CD8-positive, alpha-beta T cell (primary cell): ENCODE measurements at regions of chr17 and their contacts with region 1.

Region 1: GRCh38 chr17:41957031-41957868 is 9.3 kb upstream of the CNP start:
- DNase-seq: no peak
- ATAC-seq: no peak
- H3K4me3 ChIP-seq: no peak overlapping the region
- H3K4me3 Mint-ChIP-seq: no peak overlapping the region
- H3K27ac ChIP-seq: no peak overlapping the region
- H3K27ac Mint-ChIP-seq: no peak overlapping the region
- H3K4me1 ChIP-seq: no peaks in the 10 kb centered on the region
- H3K4me1 Mint-ChIP-seq: no peaks in the 10 kb centered on the region
- H3K27me3 ChIP-seq: no peaks in the 10 kb centered on the region
- H3K27me3 Mint-ChIP-seq: no peaks in the 10 kb centered on the region
- CTCF ChIP-seq: no peak

Region 2: GRCh38 chr17:41937970-41938954 is 19.0 kb before region 1 on chr17:
- CTCF ChIA-PET with region 1: interaction called, 4 read pairs
- POLR2A ChIA-PET with region 1: no interaction called
- intact Hi-C with region 1: loop called in 1 of 2 experiments (anchors 2 kb)
- DNase-seq: no peak
- ATAC-seq: no peak
- H3K4me3 ChIP-seq: no peak overlapping the region
- H3K4me3 Mint-ChIP-seq: no peak overlapping the region
- H3K27ac ChIP-seq: no peak overlapping the region
- H3K27ac Mint-ChIP-seq: no peak overlapping the region
- H3K4me1 ChIP-seq: no peaks in the 10 kb centered on the region
- H3K4me1 Mint-ChIP-seq: no peaks in the 10 kb centered on the region
- H3K27me3 ChIP-seq: no peaks in the 10 kb centered on the region
- H3K27me3 Mint-ChIP-seq: no peaks in the 10 kb centered on the region
- CTCF ChIP-seq: no peak

Region 3: DNA sequence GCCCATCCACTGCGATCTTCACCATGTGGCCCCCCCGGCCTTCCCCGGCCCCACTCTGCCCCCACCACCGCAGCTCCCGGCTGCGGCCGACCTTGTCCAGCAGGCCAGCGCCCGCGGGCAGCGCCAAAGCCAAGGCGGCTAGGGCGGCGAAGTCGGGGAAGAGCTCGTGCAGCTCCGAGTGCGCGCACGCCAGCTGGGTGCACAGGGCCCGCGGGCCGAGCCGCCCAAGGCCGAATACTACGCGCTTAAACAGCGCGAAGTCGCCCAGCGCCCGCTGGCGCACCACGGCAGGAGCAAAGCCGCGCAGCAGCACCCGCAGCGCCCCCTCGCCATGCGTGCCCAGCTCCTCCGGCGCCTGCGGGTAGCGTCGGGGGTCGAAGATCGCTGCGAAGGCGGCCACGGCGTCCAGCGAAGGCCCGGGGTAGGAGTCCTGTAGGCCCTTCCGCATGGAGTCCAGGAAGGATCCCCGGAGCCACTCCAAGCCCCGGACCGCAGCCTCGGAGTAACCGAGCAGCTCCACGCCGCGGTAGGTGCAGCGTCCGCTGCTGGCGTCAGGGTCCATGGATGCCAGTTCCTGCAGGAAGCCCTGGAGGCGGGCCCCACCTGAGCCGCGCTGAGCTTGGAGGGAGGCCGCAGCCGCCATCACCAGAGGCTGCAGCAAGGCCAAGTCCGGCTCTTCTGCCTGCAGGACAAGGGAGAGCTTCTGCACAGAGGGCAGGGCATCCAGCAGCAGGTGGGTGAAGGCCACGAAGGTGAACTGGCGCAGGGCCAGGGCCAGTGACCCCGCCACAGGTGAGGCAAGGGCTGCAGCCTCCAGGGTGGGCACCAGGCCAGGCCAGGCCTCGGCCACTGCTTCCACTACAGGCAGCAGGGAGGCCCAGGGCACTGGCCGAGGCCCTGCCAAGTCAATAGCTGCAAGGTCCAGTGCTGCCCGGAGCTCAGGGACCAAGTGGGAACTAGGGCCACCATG is 82.8 kb after region 1 on chr17:
- CTCF ChIA-PET with region 1: no interaction called
- POLR2A ChIA-PET with region 1: no interaction called
- intact Hi-C with region 1: no loop called
- DNase-seq: no peak
- ATAC-seq: no peak
- H3K4me3 ChIP-seq: no peak overlapping the region
- H3K4me3 Mint-ChIP-seq: no peak overlapping the region
- H3K27ac ChIP-seq: no peak overlapping the region
- H3K27ac Mint-ChIP-seq: no peak overlapping the region
- H3K4me1 ChIP-seq: no peaks in the 10 kb centered on the region
- H3K4me1 Mint-ChIP-seq: no peaks in the 10 kb centered on the region
- H3K27me3 ChIP-seq: no peaks in the 10 kb centered on the region
- H3K27me3 Mint-ChIP-seq: peaks cover 7% of the 10 kb centered on the region
- CTCF ChIP-seq: no peak